ENCODE measurements at regions of chr7 and their contacts with region 1.

Region 1: GRCh38 chr7:5117095-5117970 is 71.7 kb downstream of the RBAK start:
- DNase-seq: no peak
- ATAC-seq: no peak
- H3K4me3 ChIP-seq: no peak overlapping the region
- H3K4me3 Mint-ChIP-seq: no peak overlapping the region
- H3K27ac ChIP-seq: no peak overlapping the region
- H3K27ac Mint-ChIP-seq: no peak overlapping the region
- H3K4me1 ChIP-seq: no peaks in the 10 kb centered on the region
- H3K4me1 Mint-ChIP-seq: peaks cover 1% of the 10 kb centered on the region
- H3K27me3 ChIP-seq: no peaks in the 10 kb centered on the region
- H3K27me3 Mint-ChIP-seq: no peaks in the 10 kb centered on the region
- CTCF ChIP-seq: no peak

Region 2: GRCh38 chr7:5088906-5089305 is 28.4 kb before region 1 on chr7:
- CTCF ChIA-PET with region 1: interaction called, 11 read pairs
- POLR2A ChIA-PET with region 1: no interaction called
- intact Hi-C with region 1: no loop called
- DNase-seq: no peak
- ATAC-seq: no peak
- H3K4me3 ChIP-seq: no peak overlapping the region
- H3K4me3 Mint-ChIP-seq: no peak overlapping the region
- H3K27ac ChIP-seq: no peak overlapping the region
- H3K27ac Mint-ChIP-seq: no peak overlapping the region
- H3K4me1 ChIP-seq: peaks cover 3% of the 10 kb centered on the region
- H3K4me1 Mint-ChIP-seq: peaks cover 3% of the 10 kb centered on the region
- H3K27me3 ChIP-seq: peaks cover 0 to 2% of the 10 kb centered on the region in 2 experiments
- H3K27me3 Mint-ChIP-seq: no peaks in the 10 kb centered on the region
- CTCF ChIP-seq: no peak